Activated CD4-positive, alpha-beta T cell treated with anti-CD3 and anti-CD28 coated beads for 36 hours (primary cell): ENCODE measurements at regions of chr12 and their contacts with region 1.

Region 1: DNA sequence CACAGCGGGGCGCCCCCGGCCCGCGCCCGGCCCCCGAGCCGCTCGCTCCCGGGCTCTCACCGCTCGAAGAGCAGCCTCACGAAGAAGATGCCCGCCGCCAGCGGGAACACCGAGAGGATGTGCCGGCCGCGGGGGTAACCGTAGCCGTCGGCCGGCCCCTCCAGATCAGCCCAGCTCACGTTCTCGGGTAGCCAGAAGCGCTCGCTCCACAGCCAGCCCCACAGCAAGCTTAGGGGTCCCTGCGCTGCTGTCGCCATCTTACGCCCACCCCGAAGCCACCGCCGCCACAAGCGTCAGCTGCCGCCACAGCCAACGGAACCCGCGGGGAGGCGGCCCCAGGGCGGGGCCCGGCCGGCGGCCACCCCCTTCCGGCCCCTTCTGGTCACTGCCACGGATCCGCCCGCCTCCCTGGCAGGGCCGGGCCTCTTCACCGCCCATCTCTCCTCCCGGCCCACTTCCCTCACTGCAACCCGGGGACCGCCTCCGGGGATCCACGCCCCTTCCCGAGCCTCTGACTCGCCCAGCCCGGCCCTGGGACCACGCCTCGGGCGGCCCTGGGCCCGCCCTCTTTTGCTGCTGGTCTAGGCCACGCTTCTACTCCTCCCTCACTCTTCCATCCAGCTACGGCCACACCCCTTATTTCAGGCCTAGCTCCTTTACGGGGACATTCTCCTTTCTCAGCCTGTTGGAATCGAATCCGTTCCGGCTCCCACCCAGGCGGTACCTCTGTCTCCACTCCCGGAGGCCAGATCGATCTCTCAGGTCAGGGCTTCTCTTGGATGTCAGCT is at the start of gene CERS5:
- DNase-seq: peak; percentile 99
- ATAC-seq: peak; percentile 99
- H3K4me3 Mint-ChIP-seq: peak within 1 kb of the TSS; percentile 85
- H3K27ac Mint-ChIP-seq: peak within 1 kb of the TSS; percentile 96
- H3K4me1 Mint-ChIP-seq: peaks cover 27% of the 10 kb centered on the region
- H3K27me3 Mint-ChIP-seq: no peaks in the 10 kb centered on the region
- total RNA-seq, gene CERS5: 49.4 to 64.4 TPM

Region 2: GRCh38 chr12:49842519-49843352 is 324.5 kb before region 1 on chr12 and contains the start of gene BCDIN3D:
- CTCF ChIA-PET with region 1: no interaction called
- POLR2A ChIA-PET with region 1: no interaction called
- intact Hi-C with region 1: loop called in 1 of 2 experiments (anchors 1 kb)
- DNase-seq: peak; percentile 97
- ATAC-seq: peak; percentile 92
- H3K4me3 Mint-ChIP-seq: peak within 1 kb of the TSS; percentile 90
- H3K27ac Mint-ChIP-seq: peak within 1 kb of the TSS; percentile 91
- H3K4me1 Mint-ChIP-seq: peaks cover 30% of the 10 kb centered on the region
- H3K27me3 Mint-ChIP-seq: no peaks in the 10 kb centered on the region
- total RNA-seq, gene BCDIN3D: 5.5 to 5.6 TPM

Region 3: DNA sequence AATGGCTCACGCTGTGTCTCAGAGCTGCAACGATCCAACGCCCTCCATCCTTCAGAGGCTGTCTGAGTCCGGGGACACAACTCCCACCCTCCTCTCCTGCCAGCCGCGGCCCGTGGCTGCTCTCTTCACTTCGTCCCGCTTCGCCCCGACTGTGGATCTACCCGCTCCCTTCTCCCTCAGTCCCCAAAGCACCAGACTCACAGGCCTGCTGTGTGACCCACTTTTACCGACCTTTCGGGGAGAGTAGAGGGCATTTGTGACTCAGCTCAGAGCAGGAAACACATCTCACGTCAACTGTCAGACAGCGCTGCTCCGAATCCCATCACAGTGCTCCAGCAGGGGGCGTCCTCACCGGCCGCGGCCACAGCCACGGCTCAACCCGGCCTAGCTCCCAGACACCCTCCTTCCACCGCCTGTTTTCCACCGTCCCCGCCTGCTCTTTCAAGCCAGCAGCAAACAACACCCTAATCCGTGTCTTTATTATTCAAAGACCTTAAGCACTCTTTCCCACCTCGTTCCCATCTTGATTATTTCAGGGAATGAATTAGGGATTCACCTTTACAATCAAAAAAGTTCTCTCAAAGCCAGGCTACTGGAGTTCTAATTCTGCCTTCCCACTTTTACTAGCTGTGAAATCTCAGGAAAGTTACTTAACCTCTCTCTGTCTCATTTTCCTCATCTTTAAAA is 221.7 kb before region 1 on chr12:
- CTCF ChIA-PET with region 1: no interaction called
- POLR2A ChIA-PET with region 1: no interaction called
- intact Hi-C with region 1: no loop called
- DNase-seq: peak; percentile 94
- ATAC-seq: peak; percentile 100
- H3K4me3 Mint-ChIP-seq: peak overlapping the region; percentile 74
- H3K27ac Mint-ChIP-seq: peak overlapping the region; percentile 95
- H3K4me1 Mint-ChIP-seq: peaks cover 19% of the 10 kb centered on the region
- H3K27me3 Mint-ChIP-seq: no peaks in the 10 kb centered on the region

Region 4: GRCh38 chr12:50084775-50085614 is 82.2 kb before region 1 on chr12 and contains the start of gene SMARCD1:
- CTCF ChIA-PET with region 1: interaction called, 13 read pairs
- POLR2A ChIA-PET with region 1: interaction called, 10 read pairs
- intact Hi-C with region 1: loop called (anchors 1 to 2 kb)
- DNase-seq: peak; percentile 91
- ATAC-seq: peak; percentile 90
- H3K4me3 Mint-ChIP-seq: peak within 1 kb of the TSS; percentile 85
- H3K27ac Mint-ChIP-seq: peak within 1 kb of the TSS; percentile 96
- H3K4me1 Mint-ChIP-seq: peaks cover 36% of the 10 kb centered on the region
- H3K27me3 Mint-ChIP-seq: no peaks in the 10 kb centered on the region
- total RNA-seq, gene SMARCD1: 51.8 to 76.6 TPM

Region 5: GRCh38 chr12:50187084-50187900 is 20.1 kb after region 1 on chr12:
- CTCF ChIA-PET with region 1: interaction called, 9 read pairs
- POLR2A ChIA-PET with region 1: interaction called, 5 read pairs
- intact Hi-C with region 1: loop called (anchors 1 to 2 kb)
- DNase-seq: peak; percentile 73
- ATAC-seq: peak; percentile 74
- H3K4me3 Mint-ChIP-seq: peak overlapping the region; percentile 40
- H3K27ac Mint-ChIP-seq: peak overlapping the region; percentile 87
- H3K4me1 Mint-ChIP-seq: peaks cover 55% of the 10 kb centered on the region
- H3K27me3 Mint-ChIP-seq: no peaks in the 10 kb centered on the region